Sigmoid colon (tissue), 7 donors: ENCODE measurements at regions of chr12 and their contacts with region 1.

Region 1: DNA sequence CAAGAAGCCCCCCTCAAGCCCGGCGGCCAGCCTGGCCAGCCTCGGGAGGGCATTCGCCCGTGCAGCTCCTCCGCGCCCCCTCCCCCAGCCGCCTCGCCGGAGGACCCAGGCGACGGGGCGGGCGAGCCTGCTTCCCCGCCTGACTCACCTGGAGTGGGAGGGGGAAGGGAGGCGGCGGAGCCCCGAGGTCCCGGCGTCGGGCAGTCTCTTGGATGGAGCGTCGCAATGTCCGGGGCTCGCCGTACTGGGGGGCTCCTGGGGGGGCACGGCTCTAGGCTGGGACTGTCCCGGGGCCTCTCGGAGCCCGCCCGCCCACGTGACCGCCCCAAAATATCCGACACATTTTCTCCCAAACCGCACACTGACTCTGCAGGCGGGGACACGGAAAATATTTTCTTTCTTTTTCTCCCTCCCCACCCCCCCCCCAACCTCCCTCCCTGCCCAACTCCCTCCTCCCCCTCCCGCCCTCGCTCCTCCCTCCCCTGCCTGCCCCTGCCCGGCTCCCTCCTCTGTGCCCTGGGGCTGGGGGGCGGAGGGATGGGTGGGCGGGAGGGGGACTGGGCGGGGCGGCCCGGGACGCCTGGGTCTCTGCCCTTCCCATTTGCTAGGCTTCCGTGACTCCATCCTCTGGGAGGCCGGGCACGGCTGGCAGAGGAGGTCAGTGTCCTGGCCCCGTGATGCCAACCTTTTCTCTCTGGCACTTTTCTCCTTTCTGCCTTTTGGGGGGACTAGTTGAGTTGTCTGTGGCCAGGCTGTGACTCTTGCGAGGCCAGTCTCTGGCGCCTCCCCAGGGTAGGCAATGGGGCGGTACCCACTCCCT is at the start of gene RARG:
- DNase-seq: peak; percentile 85
- H3K4me3 ChIP-seq: peak within 1 kb of the TSS; percentile 61 to 80 (median 74)
- H3K27ac ChIP-seq: peak within 1 kb of the TSS; percentile 81 to 92 (median 90)
- H3K4me1 ChIP-seq: peaks cover 0 to 45% (median 38%) of the 10 kb centered on the region in 4 donors
- H3K27me3 ChIP-seq: no peaks in the 10 kb centered on the region
- CTCF ChIP-seq: no peak
- EP300 ChIP-seq: no peak
- POLR2A ChIP-seq: no peak
- total RNA-seq, gene RARG: 9.9 to 17.2 (median 15.4) TPM

Region 2: DNA sequence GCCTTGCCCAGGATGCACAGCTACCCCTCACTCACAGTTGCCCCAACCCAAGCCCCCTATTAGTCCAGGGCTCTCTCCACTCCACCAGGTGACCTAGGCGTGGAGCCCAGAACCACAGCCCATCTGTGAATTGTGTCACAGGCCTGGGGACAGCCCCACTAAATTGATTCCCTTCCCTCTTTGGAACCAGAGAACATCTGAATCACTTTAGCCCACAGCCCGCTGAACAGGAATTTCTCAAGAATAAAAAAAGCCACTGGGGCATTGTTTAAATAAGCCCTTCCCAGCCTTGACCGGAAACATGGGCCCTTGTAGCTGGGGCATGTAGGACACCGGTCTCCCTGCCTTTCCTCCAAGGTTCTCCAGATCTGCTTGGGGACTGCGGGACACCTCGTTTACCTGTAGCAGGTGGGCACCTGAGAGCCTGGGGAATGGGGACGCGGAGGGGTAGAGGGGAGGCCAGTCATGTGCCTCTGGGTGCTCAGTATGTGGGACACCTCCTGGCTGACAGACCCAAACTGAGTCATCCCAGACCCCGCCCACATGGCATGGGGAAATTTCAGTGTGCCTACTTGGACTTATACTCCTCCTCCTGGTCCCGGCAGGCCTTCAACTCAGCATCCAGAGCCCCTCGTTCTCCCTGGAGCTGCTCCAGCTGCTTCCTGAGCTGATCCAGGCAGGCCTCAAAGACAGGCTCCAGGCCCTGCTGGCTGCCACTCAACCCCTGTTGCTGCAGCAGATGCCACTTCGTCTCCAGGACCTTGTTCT is 384.5 kb before region 1 on chr12:
- intact Hi-C with region 1: no loop called
- DNase-seq: no peak
- H3K4me3 ChIP-seq: no peak overlapping the region
- H3K27ac ChIP-seq: no peak overlapping the region
- H3K4me1 ChIP-seq: no peaks in the 10 kb centered on the region
- H3K27me3 ChIP-seq: no peaks in the 10 kb centered on the region
- CTCF ChIP-seq: no peak
- EP300 ChIP-seq: no peak
- POLR2A ChIP-seq: no peak

Region 3: GRCh38 chr12:53220801-53221202 is 11.2 kb before region 1 on chr12:
- intact Hi-C with region 1: loop called (anchors 2 kb)
- DNase-seq: peak; percentile 95
- H3K4me3 ChIP-seq: peak overlapping the region; percentile 67 to 89 (median 81)
- H3K27ac ChIP-seq: peak overlapping the region; percentile 95 to 100 (median 99)
- H3K4me1 ChIP-seq: peaks cover 0 to 79% (median 68%) of the 10 kb centered on the region in 4 donors
- H3K27me3 ChIP-seq: no peaks in the 10 kb centered on the region
- CTCF ChIP-seq: no peak
- EP300 ChIP-seq: no peak
- POLR2A ChIP-seq: no peak